ENCODE measurements at regions of chr15 and their contacts with region 1.

Region 1: DNA sequence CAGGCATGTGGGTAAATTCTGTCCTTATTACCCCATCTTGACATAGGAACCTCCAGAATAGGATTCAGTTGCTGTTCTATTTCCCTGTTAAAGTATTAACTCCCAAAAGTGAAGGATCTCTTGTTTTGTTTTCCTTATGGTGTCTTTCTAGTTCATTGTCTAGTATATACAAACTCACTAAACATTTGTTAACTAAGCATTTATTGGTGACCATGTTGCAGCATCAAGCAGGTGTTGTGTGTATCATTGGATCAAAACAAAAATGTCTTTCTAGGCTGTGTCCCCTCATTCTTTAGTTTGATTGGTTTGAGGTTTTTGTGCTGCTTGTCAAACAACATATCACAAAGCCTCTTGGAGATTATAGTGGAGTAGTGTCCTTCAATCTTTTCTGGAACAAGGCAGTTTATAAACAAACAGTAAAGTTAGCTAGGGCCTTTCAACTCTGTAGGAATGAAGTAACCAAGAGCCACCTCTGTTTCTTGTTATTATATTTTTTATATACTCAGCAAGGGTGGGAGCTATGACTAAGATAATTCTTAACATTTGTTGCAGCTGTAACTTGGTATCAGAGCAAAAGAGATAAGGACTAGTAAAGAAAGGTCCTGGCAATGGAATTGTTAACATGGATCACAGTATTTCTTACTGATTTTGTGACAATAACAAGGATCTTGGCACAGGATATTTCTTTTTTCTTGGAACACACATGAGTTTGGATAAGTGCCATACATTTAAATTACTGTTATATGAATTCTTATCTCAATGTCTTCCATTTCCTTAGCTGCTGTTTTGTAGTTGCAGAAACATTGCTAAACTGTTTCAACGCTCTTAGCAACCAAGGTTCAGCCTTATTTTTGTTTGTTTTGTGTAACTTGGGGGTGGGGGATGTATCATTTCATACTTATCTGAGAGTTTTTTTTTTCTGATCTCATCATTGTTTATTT is 49.3 kb downstream of the TMOD3 start:
- DNase-seq: no peak
- H3K27ac ChIP-seq: no peak overlapping the region
- CTCF ChIP-seq: no peak

Region 2: DNA sequence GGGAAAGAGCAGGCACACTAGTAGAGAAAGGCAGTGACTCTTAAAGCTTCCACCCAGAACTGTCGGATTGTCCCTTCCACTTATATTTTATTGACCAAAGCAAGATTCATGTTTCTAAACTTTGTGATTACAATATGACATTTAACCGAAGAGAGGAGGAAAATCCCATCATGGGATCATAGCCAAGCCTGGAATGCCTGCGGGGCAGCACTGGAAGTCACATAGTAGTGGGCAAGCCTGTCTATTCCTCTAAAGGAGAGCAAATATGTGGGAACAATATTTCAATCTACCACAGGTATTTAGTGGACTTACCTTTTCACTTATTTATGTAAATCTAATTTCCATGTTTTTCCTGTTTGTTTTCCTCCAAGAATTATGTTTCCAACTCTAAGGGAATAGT is 53.0 kb before region 1 on chr15:
- CTCF ChIA-PET with region 1: interaction called, 11 read pairs
- POLR2A ChIA-PET with region 1: no interaction called
- DNase-seq: no peak
- H3K27ac ChIP-seq: no peak overlapping the region
- CTCF ChIP-seq: no peak

Measured in RWPE1 (cell line).